Spleen (tissue), 13 donors: ENCODE measurements at regions of chr3 and their contacts with region 1.

Region 1: GRCh38 chr3:195162033-195162669 is 108.8 kb downstream of the XXYLT1 start:
- DNase-seq: peak; percentile 91
- H3K4me3 ChIP-seq: no peak overlapping the region
- H3K27ac ChIP-seq: peak overlapping the region; percentile 19 to 81 (median 74)
- H3K4me1 ChIP-seq: peaks cover 32 to 91% (median 67%) of the 10 kb centered on the region in 6 donors
- H3K27me3 ChIP-seq: no peaks in the 10 kb centered on the region
- CTCF ChIP-seq: no peak
- POLR2A ChIP-seq: no peak

Region 2: GRCh38 chr3:195224156-195224972 is 62.2 kb after region 1 on chr3:
- intact Hi-C with region 1: no loop called
- DNase-seq: no peak
- H3K4me3 ChIP-seq: no peak overlapping the region
- H3K27ac ChIP-seq: peak overlapping the region in 7 of 8 donors; percentile 2 to 76 (median 70)
- H3K4me1 ChIP-seq: peaks cover 6 to 51% (median 30%) of the 10 kb centered on the region in 6 donors
- H3K27me3 ChIP-seq: no peaks in the 10 kb centered on the region
- CTCF ChIP-seq: no peak
- POLR2A ChIP-seq: no peak

Region 3: GRCh38 chr3:195238586-195239118 is 76.5 kb after region 1 on chr3:
- intact Hi-C with region 1: loop called (anchors 10 kb)
- DNase-seq: peak; percentile 63
- H3K4me3 ChIP-seq: no peak overlapping the region
- H3K27ac ChIP-seq: peak overlapping the region in 7 of 8 donors; percentile 30 to 85 (median 79)
- H3K4me1 ChIP-seq: peaks cover 0 to 36% (median 18%) of the 10 kb centered on the region in 6 donors
- H3K27me3 ChIP-seq: no peaks in the 10 kb centered on the region
- CTCF ChIP-seq: no peak
- POLR2A ChIP-seq: no peak

Region 4: DNA sequence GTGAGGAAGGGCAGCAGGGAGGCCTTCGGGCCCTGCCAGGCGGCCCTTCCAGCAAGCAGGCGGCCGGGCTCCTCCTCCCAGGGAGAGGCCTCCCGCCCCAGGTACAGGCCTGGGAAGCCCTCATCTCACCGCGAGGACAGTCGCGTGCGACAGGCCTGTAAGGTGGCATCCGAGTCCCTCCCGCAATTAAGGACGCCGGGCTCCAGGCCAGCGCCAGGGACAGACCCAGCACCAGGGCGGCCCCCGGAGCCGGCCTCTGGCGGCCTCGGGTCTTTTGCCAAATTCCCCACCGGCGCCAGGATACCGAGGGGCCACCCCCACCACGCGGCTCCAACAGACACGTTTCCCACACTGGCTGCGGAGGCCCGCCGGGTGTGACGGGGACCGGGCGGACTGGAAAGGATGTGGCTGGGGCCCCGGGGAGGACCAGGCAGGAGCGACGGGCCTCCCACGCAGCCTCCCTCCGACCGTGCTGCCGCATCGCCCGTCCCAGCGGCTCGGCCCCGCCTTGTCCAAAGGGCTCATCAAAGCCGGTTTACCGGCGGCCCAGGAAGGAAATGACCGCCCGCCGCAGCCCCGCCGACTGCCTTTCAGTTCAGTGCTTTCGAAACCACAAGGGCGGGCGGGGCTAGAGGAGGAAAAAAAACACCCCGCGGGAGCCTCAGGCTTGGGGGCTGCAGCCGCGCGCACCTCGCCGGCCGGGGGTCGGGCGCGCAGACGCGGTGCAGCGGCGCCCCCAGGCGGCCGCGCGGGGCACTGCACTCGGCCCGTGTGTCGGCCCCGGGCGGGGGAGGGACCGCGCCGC is 97.5 kb after region 1 on chr3:
- intact Hi-C with region 1: no loop called
- DNase-seq: peak; percentile 97
- H3K4me3 ChIP-seq: peak overlapping the region; percentile 54 to 88 (median 60)
- H3K27ac ChIP-seq: peak overlapping the region; percentile 83 to 96 (median 93)
- H3K4me1 ChIP-seq: peaks cover 11 to 62% (median 33%) of the 10 kb centered on the region in 6 donors
- H3K27me3 ChIP-seq: no peaks in the 10 kb centered on the region
- CTCF ChIP-seq: peak in 7 of 11 experiments; percentile 56 to 97 (median 85)
- POLR2A ChIP-seq: peak in 1 of 3 donors; percentile 18